Endothelial cell of umbilical vein (primary cell): ENCODE measurements at regions of chr16 and their contacts with region 1.

Region 1: GRCh38 chr16:55842369-55843104 is 9.6 kb upstream of the CES1 start:
- DNase-seq: peak; percentile 48
- H3K4me3 ChIP-seq: no peak overlapping the region
- H3K27ac ChIP-seq: no peak overlapping the region
- H3K4me1 ChIP-seq: no peaks in the 10 kb centered on the region
- H3K27me3 ChIP-seq: no peaks in the 10 kb centered on the region
- CTCF ChIP-seq: peak; percentile 47 to 56
- POLR2A ChIP-seq: no peak

Region 2: GRCh38 chr16:55711959-55712876 is 130.3 kb before region 1 on chr16:
- CTCF ChIA-PET with region 1: interaction called, 26 read pairs
- POLR2A ChIA-PET with region 1: no interaction called
- dilution Hi-C with region 1: no loop called
- intact Hi-C with region 1: loop called (anchors 1 kb)
- DNase-seq: peak; percentile 47
- H3K4me3 ChIP-seq: no peak overlapping the region
- H3K27ac ChIP-seq: no peak overlapping the region
- H3K4me1 ChIP-seq: no peaks in the 10 kb centered on the region
- H3K27me3 ChIP-seq: peaks cover 1 to 2% of the 10 kb centered on the region in 2 experiments
- CTCF ChIP-seq: peak; percentile 61 to 69
- POLR2A ChIP-seq: no peak

Region 3: DNA sequence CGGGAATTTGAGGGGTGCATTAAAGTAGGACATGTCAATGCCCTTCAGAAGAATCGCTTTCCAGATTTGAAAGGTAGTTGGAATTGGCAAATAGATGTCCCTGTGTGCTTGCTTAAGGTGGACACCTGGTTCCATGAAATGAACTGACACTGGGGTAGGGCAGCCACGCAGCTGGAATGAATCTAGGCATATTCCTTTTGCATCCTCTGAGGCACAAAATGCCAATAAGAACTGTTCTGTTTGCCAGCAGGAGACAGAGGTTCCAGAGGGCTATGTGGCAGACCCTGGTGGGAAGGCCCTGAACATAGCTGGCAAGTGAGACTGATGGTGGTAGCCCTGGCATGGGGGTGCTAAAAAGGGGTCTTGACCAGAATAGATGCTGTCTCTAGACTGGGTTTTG is 125.2 kb before region 1 on chr16:
- CTCF ChIA-PET with region 1: interaction called, 26 read pairs
- POLR2A ChIA-PET with region 1: no interaction called
- dilution Hi-C with region 1: no loop called
- intact Hi-C with region 1: loop called (anchors 1 kb)
- DNase-seq: no peak
- H3K4me3 ChIP-seq: no peak overlapping the region
- H3K27ac ChIP-seq: no peak overlapping the region
- H3K4me1 ChIP-seq: no peaks in the 10 kb centered on the region
- H3K27me3 ChIP-seq: peaks cover 1 to 3% of the 10 kb centered on the region in 2 experiments
- CTCF ChIP-seq: no peak
- POLR2A ChIP-seq: no peak

Region 4: GRCh38 chr16:55735120-55735781 is 107.3 kb before region 1 on chr16:
- CTCF ChIA-PET with region 1: no interaction called
- POLR2A ChIA-PET with region 1: no interaction called
- dilution Hi-C with region 1: loop called (anchors 25 kb)
- intact Hi-C with region 1: no loop called
- DNase-seq: no peak
- H3K4me3 ChIP-seq: no peak overlapping the region
- H3K27ac ChIP-seq: no peak overlapping the region
- H3K4me1 ChIP-seq: no peaks in the 10 kb centered on the region
- H3K27me3 ChIP-seq: no peaks in the 10 kb centered on the region
- CTCF ChIP-seq: no peak
- POLR2A ChIP-seq: no peak

Region 5: DNA sequence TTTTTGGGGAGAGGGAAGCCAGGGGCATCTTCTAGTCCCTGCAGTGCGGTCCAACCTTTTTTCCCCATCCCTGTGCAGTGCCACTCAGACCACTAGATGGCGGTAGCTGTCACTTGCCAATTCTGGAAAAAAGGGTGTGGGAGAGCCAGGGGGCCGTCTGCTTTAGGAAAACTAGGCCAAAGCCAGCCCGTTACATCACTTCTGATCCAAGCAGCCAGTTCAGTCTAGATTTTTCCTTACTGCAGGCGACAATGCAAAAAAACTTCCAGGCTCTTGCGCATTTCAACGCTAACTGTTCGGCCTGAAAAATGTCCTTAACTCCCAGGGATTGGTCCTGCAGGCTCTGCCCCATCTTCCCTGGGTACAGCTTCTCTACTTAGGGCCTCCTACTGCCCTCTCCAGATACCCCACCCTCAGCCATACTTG is 101.9 kb after region 1 on chr16:
- CTCF ChIA-PET with region 1: no interaction called
- POLR2A ChIA-PET with region 1: no interaction called
- dilution Hi-C with region 1: no loop called
- intact Hi-C with region 1: no loop called
- DNase-seq: peak; percentile 41
- H3K4me3 ChIP-seq: no peak overlapping the region
- H3K27ac ChIP-seq: no peak overlapping the region
- H3K4me1 ChIP-seq: no peaks in the 10 kb centered on the region
- H3K27me3 ChIP-seq: no peaks in the 10 kb centered on the region
- CTCF ChIP-seq: peak; percentile 90 to 92
- POLR2A ChIP-seq: no peak